Activated CD4-positive, alpha-beta T cell treated with anti-CD3 and anti-CD28 coated beads, Interleukin-2, amount 10 ng/mL, durations not matched to agents 24 days and 14 days (primary cell): ENCODE measurements at regions of chr1 and their contacts with region 1.

Region 1: GRCh38 chr1:160558660-160559380 is 20.5 kb downstream of the CD84 start:
- DNase-seq: no peak
- H3K4me3 Mint-ChIP-seq: peak overlapping the region; percentile 73
- H3K27ac Mint-ChIP-seq: peak overlapping the region; percentile 78
- H3K4me1 Mint-ChIP-seq: peaks cover 46% of the 10 kb centered on the region
- H3K27me3 Mint-ChIP-seq: no peaks in the 10 kb centered on the region

Region 2: DNA sequence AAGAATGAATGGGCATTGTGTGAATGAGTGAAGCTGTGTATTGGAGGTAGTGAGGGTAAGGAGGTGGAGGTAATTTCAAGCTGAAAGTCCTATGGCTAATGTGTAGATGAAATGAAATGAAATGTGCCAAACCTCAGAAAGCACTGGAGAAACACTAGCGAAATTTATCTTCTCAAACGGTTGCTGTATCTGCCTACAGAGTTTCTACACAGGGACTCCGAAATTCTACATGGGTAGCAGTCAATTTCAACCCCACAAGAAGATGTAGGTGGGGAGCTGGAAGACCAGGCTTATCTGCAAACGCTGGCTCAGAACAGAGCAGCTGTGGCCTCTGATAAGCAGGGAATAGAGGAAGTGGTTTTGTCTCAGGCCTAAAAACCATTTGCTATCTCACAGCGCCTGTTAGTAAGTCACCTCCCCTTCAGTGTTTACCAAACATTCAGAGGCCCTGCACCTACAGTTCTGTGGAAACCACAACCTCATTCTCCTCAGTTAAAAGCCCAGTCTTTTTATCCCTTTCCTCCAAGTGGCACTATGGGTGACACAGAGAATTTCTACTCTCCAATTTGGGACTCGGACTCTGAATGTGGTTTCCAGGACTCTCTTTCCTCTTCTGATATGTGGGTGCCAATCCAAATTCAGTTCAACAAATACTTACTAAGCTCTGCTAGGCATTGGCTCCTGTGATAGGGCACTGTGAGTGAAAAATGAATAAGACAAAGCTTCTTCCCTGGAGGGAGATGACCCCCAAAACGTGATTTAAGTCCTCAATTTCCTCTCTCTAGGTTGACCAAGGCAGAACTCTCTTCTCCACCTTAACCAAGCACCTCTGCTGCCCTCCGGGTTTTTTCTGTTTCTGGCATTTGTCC is 18.6 kb before region 1 on chr1:
- intact Hi-C with region 1: loop called (anchors 2 kb)
- DNase-seq: peak; percentile 90
- H3K4me3 Mint-ChIP-seq: peak overlapping the region; percentile 72
- H3K27ac Mint-ChIP-seq: peak overlapping the region; percentile 91
- H3K4me1 Mint-ChIP-seq: peaks cover 45% of the 10 kb centered on the region
- H3K27me3 Mint-ChIP-seq: no peaks in the 10 kb centered on the region

Region 3: GRCh38 chr1:161001525-161001924 is 442.7 kb after region 1 on chr1:
- intact Hi-C with region 1: no loop called
- DNase-seq: no peak
- H3K4me3 Mint-ChIP-seq: no peak overlapping the region
- H3K27ac Mint-ChIP-seq: no peak overlapping the region
- H3K4me1 Mint-ChIP-seq: peaks cover 8% of the 10 kb centered on the region
- H3K27me3 Mint-ChIP-seq: no peaks in the 10 kb centered on the region